ENCODE measurements at regions of chr2 and their contacts with region 1.

Region 1: DNA sequence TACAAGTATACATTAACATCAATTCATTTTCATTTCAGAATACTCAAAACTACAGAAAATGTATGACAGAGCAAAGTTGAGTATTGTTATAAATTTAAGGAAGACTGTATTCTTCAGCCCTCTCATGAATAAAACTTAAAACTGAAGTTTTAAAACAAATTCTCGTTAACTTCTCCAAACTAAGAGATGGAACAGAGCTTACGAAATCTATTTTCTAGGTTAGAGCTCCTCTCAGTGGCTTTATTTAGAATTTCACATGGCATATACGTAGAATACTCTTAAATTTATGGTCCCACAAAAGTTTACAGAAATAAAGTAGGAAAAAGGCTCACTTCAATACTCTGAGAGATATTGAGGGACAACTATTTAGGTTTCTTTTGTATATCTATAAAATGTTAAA is 612.1 kb downstream of the KCNJ3 start:
- DNase-seq: peak; percentile 50
- H3K4me3 ChIP-seq: no peak overlapping the region
- H3K27ac ChIP-seq: no peak overlapping the region
- H3K4me1 ChIP-seq: no peaks in the 10 kb centered on the region
- CTCF ChIP-seq: peak; percentile 86

Region 2: GRCh38 chr2:154392256-154392655 is 918.3 kb before region 1 on chr2:
- CTCF ChIA-PET with region 1: no interaction called
- POLR2A ChIA-PET with region 1: no interaction called
- intact Hi-C with region 1: loop called (anchors 10 kb)
- DNase-seq: peak; percentile 70
- H3K4me3 ChIP-seq: peak overlapping the region; percentile 19
- H3K27ac ChIP-seq: peak overlapping the region; percentile 73
- H3K4me1 ChIP-seq: peaks cover 35% of the 10 kb centered on the region
- CTCF ChIP-seq: no peak

Region 3: GRCh38 chr2:155456222-155456621 is 145.6 kb after region 1 on chr2:
- CTCF ChIA-PET with region 1: no interaction called
- POLR2A ChIA-PET with region 1: no interaction called
- intact Hi-C with region 1: no loop called
- DNase-seq: no peak
- H3K4me3 ChIP-seq: no peak overlapping the region
- H3K27ac ChIP-seq: no peak overlapping the region
- H3K4me1 ChIP-seq: no peaks in the 10 kb centered on the region
- CTCF ChIP-seq: no peak

Region 4: GRCh38 chr2:155965415-155966063 is 655.0 kb after region 1 on chr2:
- CTCF ChIA-PET with region 1: no interaction called
- POLR2A ChIA-PET with region 1: no interaction called
- intact Hi-C with region 1: no loop called
- DNase-seq: no peak
- H3K4me3 ChIP-seq: no peak overlapping the region
- H3K27ac ChIP-seq: no peak overlapping the region
- H3K4me1 ChIP-seq: no peaks in the 10 kb centered on the region
- CTCF ChIP-seq: no peak